Cardiac septum (tissue), 1 donor: ENCODE measurements at regions of chr4 and their contacts with region 1.

Region 1: DNA sequence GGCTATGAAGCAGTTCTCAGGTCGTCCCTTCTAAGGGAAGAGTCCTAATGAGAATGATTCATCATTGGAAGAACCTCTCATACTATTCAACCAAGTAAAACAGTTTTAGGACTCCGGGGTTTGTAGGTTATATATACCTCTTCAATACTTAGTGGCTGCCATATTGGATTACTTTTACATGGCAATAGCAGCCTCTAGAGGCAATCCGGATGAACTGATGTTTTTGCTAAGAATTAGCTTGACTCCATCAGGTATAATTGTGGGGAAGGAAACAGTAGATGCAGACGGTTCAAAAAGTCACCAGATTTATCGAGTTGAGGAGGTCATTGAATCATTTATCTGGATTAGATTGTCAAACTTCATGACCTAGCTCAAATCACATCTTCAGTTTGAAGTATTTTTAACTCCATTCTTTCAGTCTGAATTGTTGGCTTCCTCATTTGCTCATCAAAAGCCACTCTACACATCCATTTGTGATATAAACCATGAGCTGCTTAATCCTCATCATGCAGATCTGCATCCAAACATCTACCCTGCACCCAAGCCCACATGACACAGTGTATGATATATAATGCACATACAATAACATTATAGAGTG is 28.4 kb downstream of the GUCY1B1 start:
- DNase-seq: no peak

Region 2: GRCh38 chr4:155403886-155404285 is 383.3 kb before region 1 on chr4:
- intact Hi-C with region 1: loop called (anchors 2 kb)
- DNase-seq: no peak

Region 3: GRCh38 chr4:155442267-155443105 is 344.7 kb before region 1 on chr4:
- intact Hi-C with region 1: loop called (anchors 2 kb)
- DNase-seq: peak; percentile 88